Ovary (tissue), 10 donors: ENCODE measurements at regions of chr6 and their contacts with region 1.

Region 1: GRCh38 chr6:97068211-97068610 is 143.7 kb downstream of the KLHL32 start:
- DNase-seq: no peak
- H3K4me3 ChIP-seq: no peak overlapping the region
- H3K27ac ChIP-seq: no peak overlapping the region
- H3K4me1 ChIP-seq: no peaks in the 10 kb centered on the region
- H3K27me3 ChIP-seq: no peaks in the 10 kb centered on the region
- CTCF ChIP-seq: peak in 1 of 3 donors; percentile 16
- EP300 ChIP-seq: no peak
- POLR2A ChIP-seq: no peak

Region 2: GRCh38 chr6:96626759-96627364 is 441.3 kb before region 1 on chr6:
- intact Hi-C with region 1: loop called in 1 of 4 experiments (anchors 10 kb)
- DNase-seq: no peak
- H3K4me3 ChIP-seq: no peak overlapping the region
- H3K27ac ChIP-seq: no peak overlapping the region
- H3K4me1 ChIP-seq: no peaks in the 10 kb centered on the region
- H3K27me3 ChIP-seq: no peaks in the 10 kb centered on the region
- CTCF ChIP-seq: peak in 2 of 3 donors; percentile 19 to 23
- EP300 ChIP-seq: no peak
- POLR2A ChIP-seq: no peak